ENCODE measurements at regions of chr12 and their contacts with region 1.

Region 1: DNA sequence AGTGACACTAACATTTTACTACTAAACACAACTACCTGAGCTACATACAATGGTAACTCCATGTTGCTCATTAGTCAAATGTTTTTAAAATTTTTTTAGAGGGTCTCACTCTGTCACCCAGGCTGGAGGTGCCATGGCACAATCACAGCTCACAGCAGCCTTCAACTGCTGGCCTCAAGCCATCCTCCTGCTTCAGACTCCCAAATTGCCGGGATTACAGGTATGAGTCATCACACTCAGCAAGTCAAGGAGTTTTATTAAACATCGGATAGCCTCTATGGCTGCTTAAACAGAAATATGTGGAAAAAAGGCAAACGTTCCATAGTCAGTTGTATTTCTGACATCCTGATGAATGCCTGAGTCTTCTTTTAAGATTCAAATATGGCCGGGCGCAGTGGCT is 11.1 kb upstream of the NPFF start:
- DNase-seq: no peak
- H3K4me3 ChIP-seq: no peak overlapping the region
- CTCF ChIP-seq: no peak
- POLR2A ChIP-seq: no peak

Region 2: GRCh38 chr12:53376747-53377146 is 141.6 kb before region 1 on chr12:
- intact Hi-C with region 1: no loop called
- DNase-seq: no peak
- H3K4me3 ChIP-seq: no peak overlapping the region
- CTCF ChIP-seq: no peak
- POLR2A ChIP-seq: no peak

Region 3: GRCh38 chr12:53465679-53466078 is 52.7 kb before region 1 on chr12:
- intact Hi-C with region 1: loop called (anchors 10 kb)
- DNase-seq: no peak
- H3K4me3 ChIP-seq: no peak overlapping the region
- CTCF ChIP-seq: no peak
- POLR2A ChIP-seq: no peak